ENCODE measurements at regions of chr6 and their contacts with region 1.

Region 1: GRCh38 chr6:43506667-43507471 is 3.3 kb downstream of the LRRC73 start:
- DNase-seq: peak in 1 of 2 donors; percentile 86
- H3K4me3 ChIP-seq: no peak overlapping the region
- H3K27ac ChIP-seq: no peak overlapping the region
- H3K4me1 ChIP-seq: peaks cover 8 to 15% of the 10 kb centered on the region in 2 donors
- H3K27me3 ChIP-seq: no peaks in the 10 kb centered on the region
- CTCF ChIP-seq: peak; percentile 86 to 97 (median 91)

Region 2: DNA sequence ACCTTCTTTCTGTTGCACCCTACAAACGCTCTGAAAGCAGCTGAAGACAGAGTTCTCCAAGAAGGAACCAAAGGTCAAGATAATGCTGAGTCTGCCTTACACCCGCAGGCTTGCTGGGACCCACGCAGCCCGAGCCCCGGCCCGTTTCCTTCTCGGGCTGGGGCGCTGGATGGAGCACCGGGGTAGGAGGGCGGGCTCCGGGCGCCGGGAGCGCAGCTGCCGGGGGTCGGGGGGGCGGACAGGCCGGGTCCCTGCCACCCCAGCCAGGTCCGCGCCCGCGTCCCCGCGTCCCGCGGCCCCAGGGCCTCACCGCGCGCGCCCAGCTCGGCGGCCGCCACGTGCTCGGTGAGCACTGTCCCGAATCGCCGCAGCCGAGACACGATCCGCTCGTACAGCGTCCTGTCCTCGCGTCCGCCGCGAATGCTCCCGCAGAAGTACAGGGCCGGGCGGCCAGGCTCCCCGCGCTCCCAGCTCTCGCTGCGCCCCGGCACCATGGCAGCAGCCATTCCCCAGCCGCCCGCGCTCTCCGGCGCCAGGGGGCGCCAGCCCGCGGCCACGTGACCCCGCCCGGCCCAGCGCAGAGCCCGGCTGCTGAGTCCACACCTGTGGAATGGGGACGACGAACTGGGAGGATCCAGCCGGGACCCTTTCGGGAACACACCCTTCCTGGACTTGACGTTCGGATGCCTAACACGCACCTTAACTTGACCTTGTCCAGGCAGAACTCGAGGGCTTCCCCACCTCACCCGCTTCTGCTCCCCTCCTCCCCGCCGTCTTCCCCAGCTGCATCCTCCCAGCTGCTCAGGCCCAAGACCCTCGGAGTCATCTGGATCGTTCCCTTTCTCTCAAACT is 277.7 kb before region 1 on chr6 and contains the start of gene DNPH1:
- intact Hi-C with region 1: loop called (anchors 5 kb)
- DNase-seq: peak; percentile 25 to 84
- H3K4me3 ChIP-seq: peak within 1 kb of the TSS; percentile 74 to 78
- H3K27ac ChIP-seq: no peak within 1 kb of the TSS
- H3K4me1 ChIP-seq: peaks cover 3 to 6% of the 10 kb centered on the region in 2 donors
- H3K27me3 ChIP-seq: no peaks in the 10 kb centered on the region
- CTCF ChIP-seq: peak; percentile 57 to 93 (median 77)
- total RNA-seq, gene DNPH1: 39.1 TPM

Region 3: GRCh38 chr6:43286980-43287716 is 219.7 kb before region 1 on chr6:
- intact Hi-C with region 1: no loop called
- DNase-seq: no peak
- H3K4me3 ChIP-seq: no peak overlapping the region
- H3K27ac ChIP-seq: no peak overlapping the region
- H3K4me1 ChIP-seq: no peaks in the 10 kb centered on the region
- H3K27me3 ChIP-seq: no peaks in the 10 kb centered on the region
- CTCF ChIP-seq: no peak

Region 4: DNA sequence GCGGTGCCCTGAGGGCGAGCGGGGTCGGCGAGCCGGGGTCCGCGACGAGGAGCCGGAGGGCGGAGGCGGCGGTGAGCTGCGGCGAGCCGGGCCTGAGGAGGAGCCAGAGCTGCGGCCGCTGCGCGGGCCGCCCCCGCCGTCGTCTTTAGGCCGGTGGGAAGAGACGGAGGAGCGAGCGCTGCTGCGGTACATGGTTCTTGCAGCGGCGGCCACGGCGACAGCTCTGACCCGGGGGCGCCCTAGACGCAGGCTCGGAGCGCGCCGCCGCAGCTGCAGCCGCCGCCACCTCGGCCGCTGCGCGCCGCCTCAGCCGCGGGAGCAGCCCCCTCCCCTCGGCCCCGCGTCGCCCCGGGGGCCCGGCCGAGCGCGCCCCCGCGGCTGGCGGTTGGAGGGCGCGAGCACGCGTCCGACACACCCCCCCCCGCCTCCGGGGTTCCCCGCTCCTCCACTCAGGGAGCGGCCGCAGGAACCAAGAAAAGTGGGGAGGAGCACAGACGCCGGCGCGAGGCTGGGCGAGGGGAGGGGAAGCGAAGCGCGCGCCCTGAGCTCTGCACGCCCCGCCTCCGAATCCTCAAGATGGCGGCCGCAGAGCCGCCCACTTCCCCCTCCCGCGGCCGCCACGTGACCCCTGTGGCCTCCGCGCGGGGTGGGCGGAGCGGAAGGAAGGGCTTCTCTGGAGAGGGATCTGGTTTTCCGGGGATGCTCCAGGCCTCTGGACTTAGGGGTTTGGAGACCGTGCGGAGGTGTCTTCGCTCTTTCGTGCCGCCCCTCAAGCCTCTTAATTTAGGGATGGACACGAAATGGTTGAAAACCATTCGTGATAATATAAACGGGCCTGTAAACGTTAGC is 137.5 kb before region 1 on chr6 and contains the start of gene ZNF318:
- intact Hi-C with region 1: loop called (anchors 1 kb)
- DNase-seq: peak; percentile 85 to 97
- H3K4me3 ChIP-seq: peak within 1 kb of the TSS; percentile 83 to 97
- H3K27ac ChIP-seq: peak within 1 kb of the TSS; percentile 80 to 88
- H3K4me1 ChIP-seq: peaks cover 3 to 14% of the 10 kb centered on the region in 2 donors
- H3K27me3 ChIP-seq: no peaks in the 10 kb centered on the region
- CTCF ChIP-seq: no peak
- total RNA-seq, gene ZNF318: 4.4 TPM

Region 5: DNA sequence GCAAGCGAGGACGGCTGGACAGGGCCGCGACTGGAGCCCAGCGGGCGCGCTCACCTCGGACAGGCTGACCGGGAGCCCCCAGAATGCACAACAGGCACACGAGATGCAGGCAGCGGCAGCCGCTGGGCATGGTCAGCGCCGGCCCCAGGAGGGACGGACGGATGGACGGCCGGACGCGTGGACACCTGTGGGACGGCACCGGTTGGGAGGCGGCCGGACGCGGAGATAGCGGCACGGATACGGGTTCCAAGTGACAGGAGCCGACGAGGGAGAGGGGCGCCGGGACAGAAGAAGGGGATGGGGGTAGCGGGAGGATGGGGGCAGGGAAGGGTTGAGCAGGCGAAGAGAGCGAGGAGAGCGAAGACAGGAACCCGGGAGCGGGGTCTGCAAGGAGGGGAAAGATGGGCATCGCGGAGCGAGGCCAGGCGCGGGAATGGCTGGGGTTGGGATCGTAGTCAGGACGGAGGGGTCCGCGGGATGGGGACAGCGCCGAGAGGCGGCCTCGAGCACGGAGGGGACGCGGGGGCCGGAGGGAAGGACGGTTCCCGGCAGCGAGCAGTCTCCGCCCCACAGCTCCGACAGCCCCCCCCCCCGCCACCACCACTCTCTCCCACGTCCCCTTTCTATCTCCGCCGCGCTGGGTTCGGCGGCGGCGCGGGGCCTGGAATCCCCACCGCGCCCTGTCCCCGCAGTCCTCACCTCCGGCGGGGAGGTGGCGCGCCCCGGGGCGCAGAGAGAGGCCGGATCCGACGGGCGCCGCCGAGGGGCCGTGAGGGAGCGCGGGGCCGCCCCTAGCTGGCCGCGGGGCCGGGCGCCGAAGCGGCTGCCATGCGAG is 52.0 kb before region 1 on chr6:
- intact Hi-C with region 1: loop called (anchors 1 kb)
- DNase-seq: peak in 1 of 2 donors; percentile 88
- H3K4me3 ChIP-seq: peak overlapping the region; percentile 58 to 64
- H3K27ac ChIP-seq: no peak overlapping the region
- H3K4me1 ChIP-seq: peaks cover 0 to 9% of the 10 kb centered on the region in 2 donors
- H3K27me3 ChIP-seq: peaks cover 5% of the 10 kb centered on the region
- CTCF ChIP-seq: no peak